T-cell (primary cell): ENCODE measurements at regions of chr1 and their contacts with region 1.

Region 1: DNA sequence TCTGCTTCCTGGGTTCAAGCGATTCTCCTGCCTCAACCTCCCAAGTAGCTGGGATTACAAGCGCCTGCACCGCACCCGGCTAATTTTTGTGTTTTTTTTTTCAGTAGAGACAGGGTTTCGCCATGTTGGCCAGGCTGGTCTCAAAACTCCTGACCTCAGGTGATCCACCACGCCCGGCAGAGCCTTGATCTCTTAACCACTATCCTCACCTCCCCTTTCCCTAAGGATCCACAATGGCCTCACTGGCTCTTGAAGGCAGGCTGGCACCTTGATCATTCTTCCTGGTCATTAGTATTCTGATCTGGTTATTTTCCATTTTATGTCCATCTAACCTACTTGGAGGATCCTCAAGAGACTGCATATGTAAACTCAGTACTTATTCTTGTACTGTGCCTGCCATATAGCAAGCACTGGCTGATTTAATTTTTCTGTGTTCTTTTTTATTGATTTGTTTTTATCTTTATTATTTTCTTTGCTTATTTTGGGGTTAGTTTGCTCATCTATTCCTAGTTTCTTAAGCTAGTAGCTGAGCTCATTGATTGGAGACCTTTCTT is 6.3 kb downstream of the RCC1 start:
- DNase-seq: no peak
- ATAC-seq: no peak
- H3K4me3 ChIP-seq: peak overlapping the region in 1 of 2 donors; percentile 29
- H3K4me3 Mint-ChIP-seq: peak overlapping the region; percentile 49 to 100 (median 72)
- H3K27ac ChIP-seq: peak overlapping the region; percentile 39
- H3K27ac Mint-ChIP-seq: peak overlapping the region; percentile 86 to 87
- H3K4me1 ChIP-seq: peaks cover 37 to 63% of the 10 kb centered on the region in 2 experiments
- H3K4me1 Mint-ChIP-seq: peaks cover 51 to 60% (median 57%) of the 10 kb centered on the region in 3 donors
- H3K27me3 ChIP-seq: no peaks in the 10 kb centered on the region
- H3K27me3 Mint-ChIP-seq: no peaks in the 10 kb centered on the region

Region 2: DNA sequence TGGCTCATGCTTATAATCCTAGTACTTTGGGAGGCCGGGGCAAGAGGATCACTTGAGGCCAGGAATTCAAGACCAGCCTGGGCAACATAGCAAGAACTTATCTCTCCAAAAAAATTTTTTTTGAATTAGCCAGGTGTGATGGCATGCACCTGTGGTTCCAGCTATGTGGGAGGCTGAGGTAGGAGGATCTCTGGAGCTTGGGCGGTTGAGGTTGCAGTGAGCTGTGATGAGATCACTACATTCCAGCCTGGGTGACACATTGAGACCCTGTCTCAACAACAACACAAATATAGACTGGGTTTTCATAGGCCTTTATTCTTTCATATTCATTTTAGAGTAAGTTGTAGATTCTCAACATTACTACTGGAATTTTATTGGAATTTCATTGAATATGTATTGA is 170.5 kb before region 1 on chr1:
- CTCF ChIA-PET with region 1: no interaction called
- POLR2A ChIA-PET with region 1: interaction called in 1 of 2 experiments, 11 read pairs
- DNase-seq: no peak
- ATAC-seq: no peak
- H3K4me3 ChIP-seq: no peak overlapping the region
- H3K4me3 Mint-ChIP-seq: no peak overlapping the region
- H3K27ac ChIP-seq: no peak overlapping the region
- H3K27ac Mint-ChIP-seq: no peak overlapping the region
- H3K4me1 ChIP-seq: no peaks in the 10 kb centered on the region
- H3K4me1 Mint-ChIP-seq: peaks cover 0 to 3% (median 2%) of the 10 kb centered on the region in 3 donors
- H3K27me3 ChIP-seq: no peaks in the 10 kb centered on the region
- H3K27me3 Mint-ChIP-seq: no peaks in the 10 kb centered on the region